ENCODE measurements at regions of chr5 and their contacts with region 1.

Region 1: DNA sequence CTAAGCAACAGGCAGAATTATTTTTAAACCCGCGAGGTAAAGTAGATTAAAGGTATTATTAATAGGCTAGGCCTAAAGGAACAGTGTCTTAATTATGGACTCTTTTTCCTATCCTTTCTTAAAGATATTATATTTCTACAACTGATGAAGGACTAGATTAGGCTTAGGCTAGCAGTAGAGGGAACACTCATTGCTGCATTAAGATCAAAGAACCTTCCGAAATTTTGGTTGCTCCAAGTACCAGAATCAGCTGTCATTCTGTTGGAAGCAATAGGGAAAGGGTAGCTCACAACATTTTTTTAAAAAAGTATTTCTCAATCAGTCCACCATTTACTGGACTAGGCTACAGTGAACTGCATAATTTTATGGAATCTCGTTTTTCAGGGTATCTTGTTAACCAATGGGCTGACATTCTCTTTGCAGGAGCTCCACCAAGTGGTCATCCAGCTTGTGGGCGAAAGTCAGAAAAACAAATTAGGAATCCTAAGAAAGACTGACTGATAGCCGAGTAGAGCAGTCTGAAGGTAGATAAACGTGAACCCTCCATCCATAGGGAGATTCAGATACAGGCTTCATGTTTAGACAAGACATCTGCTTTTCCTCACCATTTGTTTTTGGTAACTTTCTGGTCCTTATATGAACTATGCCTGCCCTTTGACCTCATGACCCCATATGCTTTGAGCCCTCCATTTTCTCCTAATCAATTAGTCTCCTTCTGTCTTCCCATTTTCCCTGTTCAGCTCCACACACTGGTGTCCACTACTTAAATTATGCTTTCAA is 103.6 kb upstream of the CHD1 start:
- DNase-seq: peak; percentile 60 to 88
- H3K4me3 ChIP-seq: peak overlapping the region; percentile 28 to 37 (median 32)
- H3K27ac ChIP-seq: peak overlapping the region in 4 of 5 donors; percentile 49 to 80 (median 70)
- H3K4me1 ChIP-seq: peaks cover 0 to 29% (median 12%) of the 10 kb centered on the region in 4 donors
- H3K27me3 ChIP-seq: no peaks in the 10 kb centered on the region
- CTCF ChIP-seq: peak in 5 of 7 experiments; percentile 46 to 76 (median 53)
- EP300 ChIP-seq: no peak
- POLR2A ChIP-seq: no peak

Region 2: GRCh38 chr5:98911280-98912040 is 121.0 kb before region 1 on chr5:
- intact Hi-C with region 1: no loop called
- DNase-seq: no peak
- H3K4me3 ChIP-seq: no peak overlapping the region
- H3K27ac ChIP-seq: no peak overlapping the region
- H3K4me1 ChIP-seq: peaks cover 4 to 66% (median 38%) of the 10 kb centered on the region in 4 donors
- H3K27me3 ChIP-seq: no peaks in the 10 kb centered on the region
- CTCF ChIP-seq: no peak
- EP300 ChIP-seq: no peak
- POLR2A ChIP-seq: no peak

Region 3: GRCh38 chr5:98929697-98930298 is 102.6 kb before region 1 on chr5:
- intact Hi-C with region 1: loop called (anchors 10 kb)
- DNase-seq: peak in 1 of 2 donors; percentile 57
- H3K4me3 ChIP-seq: peak overlapping the region; percentile 76 to 93 (median 88)
- H3K27ac ChIP-seq: peak overlapping the region; percentile 99 to 100 (median 100)
- H3K4me1 ChIP-seq: peaks cover 22 to 73% (median 45%) of the 10 kb centered on the region in 4 donors
- H3K27me3 ChIP-seq: no peaks in the 10 kb centered on the region
- CTCF ChIP-seq: no peak
- EP300 ChIP-seq: no peak
- POLR2A ChIP-seq: no peak